ENCODE measurements at regions of chr15 and their contacts with region 1.

Region 1: DNA sequence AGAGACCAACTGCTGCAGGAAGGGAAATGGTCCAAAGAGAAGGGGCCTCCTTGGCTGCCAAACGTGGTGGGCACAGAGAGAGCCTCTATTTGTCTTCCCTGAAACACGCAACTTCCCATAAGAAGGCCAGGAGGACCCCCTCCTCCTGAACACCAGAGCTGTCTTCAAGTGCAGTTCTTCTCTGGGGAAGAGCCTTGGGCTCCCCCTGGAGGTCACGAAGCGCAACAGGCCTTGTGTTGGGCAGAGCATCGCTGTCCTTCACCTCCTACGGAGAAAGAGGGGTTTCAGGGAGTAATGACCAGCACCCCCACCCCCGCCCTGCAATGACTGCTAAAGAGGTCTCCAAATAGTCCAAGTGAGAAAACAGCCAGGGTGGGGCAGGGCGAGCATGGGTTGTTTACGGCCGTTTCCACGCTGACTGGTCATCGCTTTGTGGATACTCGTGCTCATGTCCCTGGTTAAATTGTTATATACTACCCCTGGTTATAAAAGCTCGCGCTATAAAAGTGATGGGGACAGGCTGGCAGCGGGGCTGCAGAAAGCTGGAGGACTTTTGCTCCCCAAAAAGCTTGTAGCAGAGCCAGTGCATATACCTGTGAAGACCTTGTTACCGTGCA is 397.5 kb upstream of the ATP10A start:
- DNase-seq: peak; percentile 30 to 64 (median 41)
- H3K4me3 ChIP-seq: no peak overlapping the region
- H3K27ac ChIP-seq: no peak overlapping the region
- H3K4me1 ChIP-seq: no peaks in the 10 kb centered on the region
- H3K27me3 ChIP-seq: no peaks in the 10 kb centered on the region

Region 2: GRCh38 chr15:25508369-25509002 is 752.1 kb before region 1 on chr15:
- CTCF ChIA-PET with region 1: interaction called, 22 read pairs
- POLR2A ChIA-PET with region 1: no interaction called
- DNase-seq: peak; percentile 17 to 47 (median 41)
- H3K4me3 ChIP-seq: no peak overlapping the region
- H3K27ac ChIP-seq: no peak overlapping the region
- H3K4me1 ChIP-seq: peaks cover 0 to 6% (median 0%) of the 10 kb centered on the region in 4 experiments
- H3K27me3 ChIP-seq: no peaks in the 10 kb centered on the region

Region 3: GRCh38 chr15:26166429-26166828 is 94.2 kb before region 1 on chr15:
- CTCF ChIA-PET with region 1: no interaction called
- POLR2A ChIA-PET with region 1: no interaction called
- DNase-seq: no peak
- H3K4me3 ChIP-seq: no peak overlapping the region
- H3K27ac ChIP-seq: no peak overlapping the region
- H3K4me1 ChIP-seq: no peaks in the 10 kb centered on the region
- H3K27me3 ChIP-seq: no peaks in the 10 kb centered on the region

Measured in common myeloid progenitor, CD34-positive (primary cell).